ENCODE measurements at regions of chr7 and their contacts with region 1.

Region 1: GRCh38 chr7:38796626-38797501 is 112.1 kb downstream of the VPS41 start:
- DNase-seq: peak; percentile 64
- H3K4me3 Mint-ChIP-seq: no peak overlapping the region
- H3K27ac Mint-ChIP-seq: no peak overlapping the region
- H3K4me1 Mint-ChIP-seq: no peaks in the 10 kb centered on the region
- H3K27me3 Mint-ChIP-seq: no peaks in the 10 kb centered on the region
- CTCF ChIP-seq: peak; percentile 78

Region 2: GRCh38 chr7:38817526-38817925 is 20.7 kb after region 1 on chr7:
- CTCF ChIA-PET with region 1: interaction called, 19 read pairs
- POLR2A ChIA-PET with region 1: no interaction called
- intact Hi-C with region 1: no loop called
- DNase-seq: no peak
- H3K4me3 Mint-ChIP-seq: no peak overlapping the region
- H3K27ac Mint-ChIP-seq: no peak overlapping the region
- H3K4me1 Mint-ChIP-seq: no peaks in the 10 kb centered on the region
- H3K27me3 Mint-ChIP-seq: no peaks in the 10 kb centered on the region
- CTCF ChIP-seq: no peak

Region 3: DNA sequence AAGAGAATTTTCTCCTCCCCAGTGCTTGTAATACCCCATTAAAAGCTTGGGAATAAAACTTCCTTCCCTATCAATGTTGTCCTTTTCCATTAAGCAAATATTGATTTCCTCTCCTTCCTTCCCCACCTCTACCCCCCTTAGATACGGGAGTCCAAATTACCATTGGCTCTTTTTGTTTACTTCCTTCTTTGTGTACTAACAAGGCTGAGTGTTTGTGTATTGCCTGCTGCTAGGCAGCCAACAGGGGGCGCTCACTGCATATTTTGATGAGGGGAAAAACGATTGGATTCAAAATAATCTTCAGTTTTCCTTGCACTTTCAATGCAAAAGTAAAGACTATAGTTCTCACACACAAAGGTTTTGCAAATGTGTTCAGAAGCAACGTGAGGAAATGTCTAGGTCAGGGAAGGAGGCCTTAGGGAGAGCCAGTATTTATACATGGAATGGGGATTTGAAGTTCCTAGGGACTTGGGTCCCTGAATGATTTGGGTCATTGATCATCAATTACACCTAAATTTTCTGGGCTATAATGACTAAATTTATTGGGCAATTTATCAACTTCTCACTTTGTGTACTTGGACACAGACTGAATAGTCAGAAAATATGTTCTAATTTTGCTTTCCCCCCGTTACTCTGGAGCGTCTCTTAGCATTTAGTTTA is 135.8 kb after region 1 on chr7:
- CTCF ChIA-PET with region 1: no interaction called
- POLR2A ChIA-PET with region 1: no interaction called
- intact Hi-C with region 1: loop called (anchors 1 kb)
- DNase-seq: peak; percentile 65
- H3K4me3 Mint-ChIP-seq: no peak overlapping the region
- H3K27ac Mint-ChIP-seq: no peak overlapping the region
- H3K4me1 Mint-ChIP-seq: peaks cover 7% of the 10 kb centered on the region
- H3K27me3 Mint-ChIP-seq: peaks cover 57% of the 10 kb centered on the region
- CTCF ChIP-seq: peak; percentile 82

Region 4: DNA sequence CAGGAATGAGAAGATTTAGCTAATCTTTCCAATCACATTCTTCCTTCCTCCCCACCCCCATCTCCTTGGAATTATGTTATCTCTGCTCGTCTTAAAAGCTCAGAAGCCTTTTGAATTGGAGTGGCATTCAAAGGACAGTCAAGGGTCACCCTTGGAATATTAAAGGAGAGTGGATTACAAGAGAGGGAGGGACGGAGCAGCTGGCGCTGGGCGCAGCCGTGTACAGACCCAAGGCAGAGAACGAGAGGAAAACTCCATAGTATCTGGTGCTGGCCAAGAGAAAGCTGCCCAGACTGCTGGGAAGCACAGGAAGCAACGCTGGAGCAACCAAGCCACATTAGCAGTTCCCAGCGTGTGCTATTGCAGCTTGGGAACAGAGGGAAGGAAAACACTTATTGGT is 276.6 kb after region 1 on chr7:
- CTCF ChIA-PET with region 1: no interaction called
- POLR2A ChIA-PET with region 1: no interaction called
- intact Hi-C with region 1: loop called (anchors 10 kb)
- DNase-seq: no peak
- H3K4me3 Mint-ChIP-seq: no peak overlapping the region
- H3K27ac Mint-ChIP-seq: no peak overlapping the region
- H3K4me1 Mint-ChIP-seq: no peaks in the 10 kb centered on the region
- H3K27me3 Mint-ChIP-seq: peaks cover 86% of the 10 kb centered on the region
- CTCF ChIP-seq: no peak